Heart right ventricle (tissue), 16 donors: ENCODE measurements at regions of chr10 and their contacts with region 1.

Region 1: GRCh38 chr10:131981429-131982184 is at the start of gene BNIP3:
- DNase-seq: peak; percentile 93 to 99
- ATAC-seq: peak; percentile 93 to 97 (median 96)
- H3K4me3 ChIP-seq: peak within 1 kb of the TSS; percentile 61 to 99 (median 90)
- H3K27ac ChIP-seq: peak within 1 kb of the TSS; percentile 60 to 91 (median 84)
- H3K4me1 ChIP-seq: peaks cover 4 to 40% (median 35%) of the 10 kb centered on the region in 9 donors
- H3K27me3 ChIP-seq: peaks cover 0 to 24% (median 0%) of the 10 kb centered on the region in 7 donors
- CTCF ChIP-seq: peak in 2 of 9 donors; percentile 7 to 14
- total RNA-seq, gene BNIP3: 111 to 211 (median 159) TPM

Region 2: GRCh38 chr10:131909014-131909808 is 72.4 kb before region 1 on chr10:
- intact Hi-C with region 1: loop called in 2 of 10 experiments (anchors 5 kb)
- DNase-seq: no peak
- ATAC-seq: peak in 3 of 8 donors; percentile 20 to 47 (median 36)
- H3K4me3 ChIP-seq: no peak overlapping the region
- H3K27ac ChIP-seq: no peak overlapping the region
- H3K4me1 ChIP-seq: peaks cover 17 to 83% (median 66%) of the 10 kb centered on the region in 9 donors
- H3K27me3 ChIP-seq: no peaks in the 10 kb centered on the region
- CTCF ChIP-seq: no peak

Region 3: GRCh38 chr10:131996466-131997365 is 15.1 kb after region 1 on chr10:
- intact Hi-C with region 1: loop called in 1 of 10 experiments (anchors 1 kb)
- DNase-seq: peak; percentile 71 to 75
- ATAC-seq: peak; percentile 70 to 94 (median 87)
- H3K4me3 ChIP-seq: peak overlapping the region in 1 of 10 donors; percentile 1
- H3K27ac ChIP-seq: peak overlapping the region; percentile 56 to 82 (median 71)
- H3K4me1 ChIP-seq: peaks cover 14 to 45% (median 28%) of the 10 kb centered on the region in 9 donors
- H3K27me3 ChIP-seq: no peaks in the 10 kb centered on the region
- CTCF ChIP-seq: no peak

Region 4: GRCh38 chr10:132023092-132023811 is 41.6 kb after region 1 on chr10:
- intact Hi-C with region 1: loop called in 3 of 10 experiments (anchors 5 kb)
- DNase-seq: peak; percentile 82 to 89
- ATAC-seq: peak; percentile 78 to 95 (median 90)
- H3K4me3 ChIP-seq: peak overlapping the region; percentile 28 to 45 (median 34)
- H3K27ac ChIP-seq: no peak overlapping the region
- H3K4me1 ChIP-seq: peaks cover 0 to 12% (median 8%) of the 10 kb centered on the region in 9 donors
- H3K27me3 ChIP-seq: peaks cover 0 to 43% (median 34%) of the 10 kb centered on the region in 7 donors
- CTCF ChIP-seq: peak; percentile 87 to 97 (median 91)